CD8-positive, alpha-beta T cell (primary cell): ENCODE measurements at regions of chr14 and their contacts with region 1.

Region 1: GRCh38 chr14:21014761-21015190 is 10.1 kb downstream of the NDRG2 start:
- DNase-seq: peak; percentile 61 to 90 (median 84)
- ATAC-seq: peak; percentile 78
- H3K4me3 ChIP-seq: no peak overlapping the region
- H3K4me3 Mint-ChIP-seq: no peak overlapping the region
- H3K27ac ChIP-seq: no peak overlapping the region
- H3K27ac Mint-ChIP-seq: no peak overlapping the region
- H3K4me1 ChIP-seq: no peaks in the 10 kb centered on the region
- H3K4me1 Mint-ChIP-seq: no peaks in the 10 kb centered on the region
- H3K27me3 ChIP-seq: peaks cover 0 to 4% of the 10 kb centered on the region in 2 experiments
- H3K27me3 Mint-ChIP-seq: peaks cover 13% of the 10 kb centered on the region
- CTCF ChIP-seq: peak; percentile 79

Region 2: DNA sequence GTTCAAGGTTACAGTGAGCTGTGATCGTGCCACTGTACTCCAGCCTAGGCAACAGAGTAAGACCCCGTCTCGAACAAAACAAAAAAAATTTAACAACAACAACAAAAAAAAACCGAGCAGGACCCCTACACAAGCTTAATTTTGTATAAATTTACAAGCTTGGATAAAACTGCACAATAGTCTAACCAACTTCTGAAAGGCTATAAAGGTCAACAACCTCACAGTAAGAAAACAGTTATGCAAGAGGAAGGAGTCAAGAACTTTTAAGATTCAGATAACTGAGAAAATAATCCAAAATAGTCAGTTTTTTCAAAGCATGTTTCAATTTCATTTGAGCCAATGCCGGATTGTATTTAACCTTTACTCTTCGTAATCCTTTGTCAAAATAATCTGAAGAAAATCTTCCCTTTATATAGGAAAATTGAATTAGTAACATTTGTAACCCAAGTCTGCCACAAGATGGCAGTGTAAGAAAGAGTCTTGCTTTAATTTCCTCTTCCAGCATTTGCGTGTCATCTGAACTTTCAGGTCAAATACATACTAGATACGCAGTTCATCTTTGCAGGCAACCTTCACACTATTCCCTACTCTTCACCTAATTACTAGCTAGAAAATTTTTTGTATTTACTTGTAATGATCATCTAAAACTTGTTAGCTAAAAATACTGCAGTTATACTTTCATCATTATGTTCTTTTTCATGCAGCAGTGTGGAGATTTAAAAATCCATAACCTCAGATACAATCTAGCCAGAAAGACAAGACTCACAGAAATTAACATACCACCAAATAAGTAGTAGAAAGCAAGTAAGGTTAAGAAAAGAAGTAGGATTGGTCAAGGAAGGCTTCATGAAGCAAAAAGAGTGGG is 687.5 kb before region 1 on chr14:
- CTCF ChIA-PET with region 1: no interaction called
- POLR2A ChIA-PET with region 1: no interaction called
- intact Hi-C with region 1: no loop called
- DNase-seq: peak in 3 of 9 experiments; percentile 35 to 83 (median 76)
- ATAC-seq: peak; percentile 62
- H3K4me3 ChIP-seq: no peak overlapping the region
- H3K4me3 Mint-ChIP-seq: no peak overlapping the region
- H3K27ac ChIP-seq: no peak overlapping the region
- H3K27ac Mint-ChIP-seq: peak overlapping the region; percentile 62
- H3K4me1 ChIP-seq: peaks cover 6% of the 10 kb centered on the region
- H3K4me1 Mint-ChIP-seq: peaks cover 26% of the 10 kb centered on the region
- H3K27me3 ChIP-seq: no peaks in the 10 kb centered on the region
- H3K27me3 Mint-ChIP-seq: no peaks in the 10 kb centered on the region
- CTCF ChIP-seq: peak; percentile 98

Region 3: DNA sequence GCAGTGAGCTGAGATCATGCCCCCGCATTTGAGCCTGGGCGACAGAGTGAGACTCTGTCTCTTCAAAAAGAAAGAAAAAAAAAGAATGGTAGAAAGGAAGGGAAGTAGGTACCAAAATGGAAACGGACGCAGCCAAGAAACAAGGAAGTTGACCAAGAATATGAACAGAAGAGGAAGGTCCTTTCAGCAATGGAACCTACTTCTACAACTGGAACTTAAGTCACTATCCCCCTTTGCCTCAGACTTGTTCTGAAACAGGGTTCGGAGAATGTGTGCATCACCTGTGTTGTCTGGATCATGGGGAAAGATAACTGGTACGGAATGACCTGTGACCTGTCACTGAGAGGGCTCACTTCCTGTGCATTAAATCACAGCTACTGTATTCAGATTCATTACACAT is 168.2 kb before region 1 on chr14:
- CTCF ChIA-PET with region 1: no interaction called
- POLR2A ChIA-PET with region 1: no interaction called
- intact Hi-C with region 1: no loop called
- DNase-seq: no peak
- ATAC-seq: no peak
- H3K4me3 ChIP-seq: no peak overlapping the region
- H3K4me3 Mint-ChIP-seq: no peak overlapping the region
- H3K27ac ChIP-seq: no peak overlapping the region
- H3K27ac Mint-ChIP-seq: no peak overlapping the region
- H3K4me1 ChIP-seq: no peaks in the 10 kb centered on the region
- H3K4me1 Mint-ChIP-seq: no peaks in the 10 kb centered on the region
- H3K27me3 ChIP-seq: no peaks in the 10 kb centered on the region
- H3K27me3 Mint-ChIP-seq: peaks cover 9% of the 10 kb centered on the region
- CTCF ChIP-seq: no peak

Region 4: DNA sequence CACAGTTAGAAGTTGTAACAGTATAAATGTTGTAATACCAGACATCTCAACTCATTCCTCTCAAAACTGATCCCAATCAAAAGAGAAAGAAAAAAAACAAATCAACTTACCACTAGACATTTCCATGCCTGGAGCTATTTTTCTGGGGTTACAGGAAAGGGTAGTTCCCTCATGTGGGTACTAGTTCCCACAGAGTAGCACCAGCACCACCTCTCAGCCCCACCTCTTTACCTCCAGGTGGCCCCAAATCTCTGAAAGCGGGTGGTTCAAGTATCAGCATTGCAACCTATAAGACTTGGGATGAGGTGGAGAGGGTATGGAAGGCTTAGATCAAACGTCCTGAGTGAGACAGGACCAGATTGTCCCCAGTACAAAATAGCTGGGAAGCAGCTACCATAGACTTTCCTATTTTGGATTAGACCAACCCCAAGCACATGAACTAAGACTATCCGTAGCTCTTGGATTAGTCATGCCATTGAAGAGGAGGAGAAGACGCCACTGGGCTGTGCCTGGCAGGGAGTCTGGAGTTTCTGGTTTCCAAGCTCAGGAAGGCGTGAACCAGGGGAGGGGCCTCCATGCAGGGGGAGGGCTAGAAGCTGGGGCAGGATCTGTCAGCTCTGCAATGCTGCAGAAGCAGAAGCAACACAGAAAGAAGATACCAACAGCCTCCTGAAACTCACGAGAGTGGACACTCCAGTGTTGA is 16.0 kb before region 1 on chr14 and contains the start of gene SLC39A2:
- CTCF ChIA-PET with region 1: interaction called, 62 read pairs
- POLR2A ChIA-PET with region 1: interaction called, 6 read pairs
- intact Hi-C with region 1: no loop called
- DNase-seq: no peak
- ATAC-seq: no peak
- H3K4me3 ChIP-seq: no peak within 1 kb of the TSS
- H3K4me3 Mint-ChIP-seq: no peak within 1 kb of the TSS
- H3K27ac ChIP-seq: peak within 1 kb of the TSS in 1 of 2 experiments; percentile 13
- H3K27ac Mint-ChIP-seq: peak within 1 kb of the TSS; percentile 12
- H3K4me1 ChIP-seq: peaks cover 8% of the 10 kb centered on the region
- H3K4me1 Mint-ChIP-seq: peaks cover 22% of the 10 kb centered on the region
- H3K27me3 ChIP-seq: no peaks in the 10 kb centered on the region
- H3K27me3 Mint-ChIP-seq: no peaks in the 10 kb centered on the region
- CTCF ChIP-seq: no peak
- total RNA-seq, gene SLC39A2: 0.33 to 0.62 TPM

Region 5: DNA sequence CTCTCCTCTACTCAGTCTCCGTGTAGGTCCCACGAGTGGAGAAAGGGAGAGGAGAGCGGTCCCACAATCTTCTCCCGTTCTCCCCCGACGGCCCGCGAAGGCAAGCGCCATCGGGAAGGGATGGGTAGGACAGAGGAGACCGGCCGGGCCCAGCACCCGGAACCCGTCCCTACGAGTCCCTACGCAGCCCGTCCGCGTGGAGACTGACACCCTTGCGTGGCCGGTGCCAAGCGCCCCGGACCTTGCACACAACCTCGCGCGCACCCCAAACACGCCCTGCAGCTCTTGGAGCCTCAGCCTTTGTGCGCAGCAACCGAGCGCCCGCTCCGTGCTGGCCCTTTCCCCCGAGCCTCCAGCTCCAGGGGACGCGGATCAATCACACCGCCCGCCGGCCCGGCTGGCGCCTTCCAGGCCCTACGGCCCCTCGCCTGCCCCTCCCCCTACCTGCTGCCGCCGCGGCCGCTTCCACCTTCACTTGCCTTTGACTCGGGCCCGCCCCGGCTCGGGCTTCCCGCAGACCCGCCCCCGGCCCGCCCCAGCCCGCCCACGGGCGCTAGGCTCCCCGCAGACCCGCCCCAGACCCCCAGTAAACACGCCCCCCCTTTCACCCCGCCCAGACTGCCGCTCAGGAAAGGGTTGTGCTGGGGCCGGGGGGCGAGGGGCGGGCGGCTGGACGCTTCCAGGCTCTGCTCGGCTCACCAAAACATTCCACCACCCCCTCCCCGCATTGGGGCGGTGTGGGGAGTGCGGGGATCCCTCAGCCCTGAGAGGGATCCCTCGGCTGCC is 10.0 kb after region 1 on chr14 and contains the start of gene NDRG2:
- CTCF ChIA-PET with region 1: interaction called, 203 read pairs
- POLR2A ChIA-PET with region 1: interaction called, 3 read pairs
- intact Hi-C with region 1: no loop called
- DNase-seq: peak; percentile 60 to 87 (median 80)
- ATAC-seq: peak; percentile 91
- H3K4me3 ChIP-seq: peak within 1 kb of the TSS; percentile 84 to 86
- H3K4me3 Mint-ChIP-seq: peak within 1 kb of the TSS; percentile 92
- H3K27ac ChIP-seq: peak within 1 kb of the TSS in 1 of 2 experiments; percentile 33
- H3K27ac Mint-ChIP-seq: peak within 1 kb of the TSS; percentile 70
- H3K4me1 ChIP-seq: peaks cover 13% of the 10 kb centered on the region
- H3K4me1 Mint-ChIP-seq: peaks cover 19% of the 10 kb centered on the region
- H3K27me3 ChIP-seq: no peaks in the 10 kb centered on the region
- H3K27me3 Mint-ChIP-seq: no peaks in the 10 kb centered on the region
- CTCF ChIP-seq: no peak
- total RNA-seq, gene NDRG2: 18.9 to 24.8 TPM

Region 6: GRCh38 chr14:21049271-21049673 is 34.5 kb after region 1 on chr14:
- CTCF ChIA-PET with region 1: interaction called, 416 read pairs
- POLR2A ChIA-PET with region 1: interaction called, 9 read pairs
- intact Hi-C with region 1: no loop called
- DNase-seq: no peak
- ATAC-seq: no peak
- H3K4me3 ChIP-seq: no peak overlapping the region
- H3K4me3 Mint-ChIP-seq: no peak overlapping the region
- H3K27ac ChIP-seq: no peak overlapping the region
- H3K27ac Mint-ChIP-seq: no peak overlapping the region
- H3K4me1 ChIP-seq: no peaks in the 10 kb centered on the region
- H3K4me1 Mint-ChIP-seq: peaks cover 3% of the 10 kb centered on the region
- H3K27me3 ChIP-seq: no peaks in the 10 kb centered on the region
- H3K27me3 Mint-ChIP-seq: peaks cover 24% of the 10 kb centered on the region
- CTCF ChIP-seq: no peak

Region 7: DNA sequence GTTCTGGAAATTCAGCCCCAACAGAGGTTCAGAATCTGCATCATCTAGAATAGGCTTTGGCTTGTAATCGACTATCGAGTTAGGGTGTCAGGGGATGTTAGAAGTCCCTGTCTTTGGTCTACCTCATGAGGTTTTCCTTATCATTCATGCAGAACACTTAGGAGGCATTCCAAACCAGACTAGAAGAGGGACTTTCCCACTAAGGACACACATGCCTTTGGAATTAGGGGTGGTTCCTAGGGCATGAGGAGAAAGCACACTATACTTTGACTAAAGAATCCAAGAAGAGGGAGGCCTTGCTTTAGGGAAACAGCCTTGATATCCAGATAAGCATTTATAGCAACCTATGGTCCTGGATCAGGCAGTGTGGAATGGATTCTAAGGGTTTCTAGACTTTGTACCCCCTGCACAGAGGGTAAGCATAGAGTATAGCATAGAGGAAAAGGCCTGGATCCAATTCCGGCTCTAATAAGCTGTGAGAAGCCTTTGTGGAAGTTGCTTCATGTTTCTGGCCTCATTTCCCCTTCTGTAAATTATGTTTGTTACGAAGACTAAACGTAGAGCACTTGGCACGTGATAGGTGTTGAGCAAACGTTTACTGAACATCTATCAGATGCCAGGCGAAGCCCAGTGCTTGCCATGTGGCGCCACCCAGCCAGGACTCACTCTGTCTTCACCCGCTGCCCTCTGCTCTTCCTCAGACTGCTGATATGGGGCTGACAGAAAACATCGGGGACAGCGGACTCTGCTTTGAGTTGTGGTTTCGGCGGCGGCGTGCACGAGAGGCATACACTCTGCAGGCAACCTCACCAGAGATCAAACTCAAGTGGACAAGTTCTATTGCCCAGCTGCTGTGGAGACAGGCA is 70.4 kb after region 1 on chr14:
- CTCF ChIA-PET with region 1: interaction called, 41 read pairs
- POLR2A ChIA-PET with region 1: interaction called, 7 read pairs
- intact Hi-C with region 1: loop called in 1 of 2 experiments (anchors 1 kb)
- DNase-seq: no peak
- ATAC-seq: no peak
- H3K4me3 ChIP-seq: no peak overlapping the region
- H3K4me3 Mint-ChIP-seq: no peak overlapping the region
- H3K27ac ChIP-seq: no peak overlapping the region
- H3K27ac Mint-ChIP-seq: no peak overlapping the region
- H3K4me1 ChIP-seq: peaks cover 18% of the 10 kb centered on the region
- H3K4me1 Mint-ChIP-seq: peaks cover 20% of the 10 kb centered on the region
- H3K27me3 ChIP-seq: no peaks in the 10 kb centered on the region
- H3K27me3 Mint-ChIP-seq: no peaks in the 10 kb centered on the region
- CTCF ChIP-seq: no peak